MCF 10A (cell line): ENCODE measurements at regions of chr5 and their contacts with region 1.

Region 1: DNA sequence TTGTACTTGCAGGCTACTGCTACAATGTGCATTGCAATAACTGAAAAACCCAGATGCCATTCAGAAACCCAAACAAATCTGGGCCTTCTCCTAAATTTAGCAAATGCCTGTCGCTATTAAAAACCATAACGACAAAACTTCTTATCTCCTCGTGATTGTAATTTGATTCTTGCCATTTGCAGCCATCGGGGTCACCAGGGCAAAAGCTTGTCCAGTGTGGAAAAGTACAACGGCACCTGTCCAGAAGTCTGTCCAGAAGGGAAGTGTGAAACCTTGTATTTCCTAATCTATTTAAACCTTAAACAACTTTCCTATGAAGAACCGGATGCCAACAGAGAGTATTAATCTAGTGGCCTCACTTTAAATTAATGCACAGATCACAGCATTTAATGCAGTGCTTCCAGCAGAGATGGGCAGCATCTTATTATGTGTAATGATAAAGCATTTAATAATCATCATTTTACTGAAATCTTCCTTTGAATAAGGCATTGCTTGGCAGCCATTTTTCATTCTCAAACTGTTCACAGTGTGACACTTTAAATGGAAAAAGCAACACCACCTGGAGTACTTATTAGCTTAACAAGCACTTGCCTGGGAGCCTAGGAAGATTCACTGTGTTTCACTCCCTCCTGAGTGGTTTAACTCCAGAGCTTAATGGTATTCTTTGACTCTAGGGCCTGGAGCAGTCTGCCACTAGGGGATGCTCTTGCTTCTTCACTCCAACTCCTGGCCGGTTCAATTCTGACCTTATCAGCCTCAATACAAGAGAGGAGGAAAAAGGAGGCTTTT is 4.9 kb upstream of the C7 start:
- DNase-seq: peak; percentile 81
- H3K4me3 Mint-ChIP-seq: no peak overlapping the region
- H3K27ac Mint-ChIP-seq: no peak overlapping the region
- H3K4me1 Mint-ChIP-seq: peaks cover 10% of the 10 kb centered on the region
- H3K27me3 Mint-ChIP-seq: no peaks in the 10 kb centered on the region
- CTCF ChIP-seq: peak; percentile 90

Region 2: GRCh38 chr5:41115281-41115680 is 210.9 kb after region 1 on chr5:
- CTCF ChIA-PET with region 1: interaction called, 5 read pairs
- POLR2A ChIA-PET with region 1: no interaction called
- intact Hi-C with region 1: loop called (anchors 10 kb)
- DNase-seq: no peak
- H3K4me3 Mint-ChIP-seq: no peak overlapping the region
- H3K27ac Mint-ChIP-seq: no peak overlapping the region
- H3K4me1 Mint-ChIP-seq: no peaks in the 10 kb centered on the region
- H3K27me3 Mint-ChIP-seq: no peaks in the 10 kb centered on the region
- CTCF ChIP-seq: no peak

Region 3: GRCh38 chr5:41346609-41347008 is 442.2 kb after region 1 on chr5:
- CTCF ChIA-PET with region 1: interaction called, 21 read pairs
- POLR2A ChIA-PET with region 1: no interaction called
- intact Hi-C with region 1: loop called (anchors 1 kb)
- DNase-seq: peak; percentile 16
- H3K4me3 Mint-ChIP-seq: no peak overlapping the region
- H3K27ac Mint-ChIP-seq: no peak overlapping the region
- H3K4me1 Mint-ChIP-seq: no peaks in the 10 kb centered on the region
- H3K27me3 Mint-ChIP-seq: peaks cover 13% of the 10 kb centered on the region
- CTCF ChIP-seq: no peak

Region 4: GRCh38 chr5:41457094-41457493 is 552.7 kb after region 1 on chr5:
- CTCF ChIA-PET with region 1: no interaction called
- POLR2A ChIA-PET with region 1: no interaction called
- intact Hi-C with region 1: no loop called
- DNase-seq: no peak
- H3K4me3 Mint-ChIP-seq: no peak overlapping the region
- H3K27ac Mint-ChIP-seq: no peak overlapping the region
- H3K4me1 Mint-ChIP-seq: no peaks in the 10 kb centered on the region
- H3K27me3 Mint-ChIP-seq: peaks cover 10% of the 10 kb centered on the region
- CTCF ChIP-seq: no peak

Region 5: DNA sequence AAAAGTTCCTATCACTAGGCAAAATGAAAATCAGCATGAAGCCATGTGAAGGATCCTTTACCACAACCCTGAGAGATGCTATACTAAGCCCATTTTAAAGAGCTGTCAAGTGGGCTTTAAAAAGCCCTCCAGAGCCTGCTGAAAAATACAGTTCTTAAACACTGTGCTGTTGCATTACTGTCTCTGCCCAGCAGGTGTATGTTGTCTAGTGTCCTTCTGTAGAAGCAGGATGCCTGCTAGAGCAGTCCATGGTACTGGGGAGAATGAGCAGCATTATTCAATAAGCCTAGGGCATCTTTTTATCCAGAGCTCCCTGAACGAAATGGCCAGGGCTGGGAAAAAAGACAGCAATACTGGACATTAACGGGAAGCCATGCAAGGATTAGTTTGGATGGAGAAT is 732.2 kb after region 1 on chr5:
- CTCF ChIA-PET with region 1: interaction called, 43 read pairs
- POLR2A ChIA-PET with region 1: no interaction called
- intact Hi-C with region 1: loop called (anchors 1 kb)
- DNase-seq: peak; percentile 36
- H3K4me3 Mint-ChIP-seq: no peak overlapping the region
- H3K27ac Mint-ChIP-seq: no peak overlapping the region
- H3K4me1 Mint-ChIP-seq: no peaks in the 10 kb centered on the region
- H3K27me3 Mint-ChIP-seq: peaks cover 41% of the 10 kb centered on the region
- CTCF ChIP-seq: peak; percentile 24

Region 6: DNA sequence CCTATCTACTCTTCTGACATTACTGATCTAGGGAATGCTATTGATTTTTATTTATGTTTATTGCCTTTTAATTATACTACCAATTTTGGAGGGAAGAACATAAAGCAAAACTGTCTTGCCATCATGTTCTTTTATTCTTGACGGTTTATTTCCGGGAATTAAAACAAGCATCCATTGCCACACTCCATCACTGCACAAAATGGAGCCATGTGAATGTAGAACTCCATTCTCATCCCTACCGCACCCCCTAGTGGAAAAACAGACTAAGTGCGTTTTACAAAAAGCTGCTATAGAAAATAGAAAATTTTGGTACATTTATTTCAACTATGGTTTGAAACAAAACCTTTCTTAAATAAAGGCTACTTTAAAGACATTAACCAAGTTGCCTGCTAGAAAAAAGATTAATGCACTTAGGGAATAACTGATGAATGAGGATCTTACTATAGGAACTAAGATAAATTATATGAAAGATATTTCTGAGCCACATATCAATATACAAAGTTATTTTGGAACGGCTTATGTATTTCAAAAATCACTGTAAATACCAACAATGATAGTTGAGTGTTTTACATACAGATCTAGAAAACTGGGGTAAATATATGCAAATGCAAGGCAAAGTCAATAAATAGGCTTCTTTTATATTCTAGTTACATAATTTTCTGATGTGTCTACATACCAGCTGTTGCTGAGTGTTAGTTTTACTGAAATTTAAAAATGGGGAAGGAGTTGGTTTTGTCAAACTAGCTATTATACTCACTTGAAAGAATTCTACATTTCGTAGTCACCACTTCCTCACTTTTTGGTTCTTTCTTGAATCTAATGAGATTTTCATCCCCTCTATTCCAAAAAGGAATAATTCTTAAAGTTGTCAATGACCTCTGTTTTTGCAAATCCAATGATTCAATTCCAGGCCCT is 939.3 kb after region 1 on chr5:
- CTCF ChIA-PET with region 1: interaction called, 11 read pairs
- POLR2A ChIA-PET with region 1: no interaction called
- intact Hi-C with region 1: loop called (anchors 1 kb)
- DNase-seq: peak; percentile 71
- H3K4me3 Mint-ChIP-seq: no peak overlapping the region
- H3K27ac Mint-ChIP-seq: no peak overlapping the region
- H3K4me1 Mint-ChIP-seq: no peaks in the 10 kb centered on the region
- H3K27me3 Mint-ChIP-seq: no peaks in the 10 kb centered on the region
- CTCF ChIP-seq: peak; percentile 70